OCI-LY7 (cell line): ENCODE measurements at regions of chr22 and their contacts with region 1.

Region 1: DNA sequence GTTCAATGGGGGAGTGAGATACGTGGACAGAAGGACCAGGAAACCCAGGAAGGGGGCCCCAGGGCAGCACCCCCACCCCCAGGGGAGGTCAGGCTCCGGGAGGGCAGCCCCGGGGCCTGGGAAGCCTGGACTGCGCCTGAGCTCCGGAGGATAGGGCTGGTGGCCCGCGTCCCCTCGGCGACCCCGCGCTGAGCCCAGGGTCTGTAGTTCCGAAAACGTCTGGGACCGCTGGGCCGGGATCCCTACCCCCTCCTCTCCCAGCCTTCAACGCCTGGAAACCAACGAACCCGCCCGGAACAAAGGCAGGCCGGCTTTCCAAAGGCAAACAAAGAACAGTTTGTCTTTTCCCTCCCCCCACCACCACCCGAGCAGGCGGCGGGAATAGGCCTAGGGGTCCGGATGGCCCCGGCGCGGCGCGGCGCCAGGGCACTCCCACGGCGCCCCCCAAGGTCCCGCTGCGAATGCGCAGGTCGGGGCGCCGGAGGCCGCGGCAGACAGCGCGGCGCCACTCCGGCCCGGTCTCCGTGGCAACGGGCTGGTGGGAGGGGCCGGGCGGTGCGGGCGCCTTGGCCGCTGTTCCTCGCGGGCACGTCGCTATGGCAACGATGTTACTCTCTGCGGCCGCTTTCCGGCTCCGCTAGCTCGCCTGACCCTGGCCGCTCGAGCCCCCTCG is 58.5 kb downstream of the IGLL1 start:
- DNase-seq: peak; percentile 85
- H3K4me3 ChIP-seq: peak overlapping the region; percentile 57
- H3K27ac ChIP-seq: no peak overlapping the region
- H3K4me1 ChIP-seq: peaks cover 25% of the 10 kb centered on the region
- CTCF ChIP-seq: peak; percentile 55

Region 2: DNA sequence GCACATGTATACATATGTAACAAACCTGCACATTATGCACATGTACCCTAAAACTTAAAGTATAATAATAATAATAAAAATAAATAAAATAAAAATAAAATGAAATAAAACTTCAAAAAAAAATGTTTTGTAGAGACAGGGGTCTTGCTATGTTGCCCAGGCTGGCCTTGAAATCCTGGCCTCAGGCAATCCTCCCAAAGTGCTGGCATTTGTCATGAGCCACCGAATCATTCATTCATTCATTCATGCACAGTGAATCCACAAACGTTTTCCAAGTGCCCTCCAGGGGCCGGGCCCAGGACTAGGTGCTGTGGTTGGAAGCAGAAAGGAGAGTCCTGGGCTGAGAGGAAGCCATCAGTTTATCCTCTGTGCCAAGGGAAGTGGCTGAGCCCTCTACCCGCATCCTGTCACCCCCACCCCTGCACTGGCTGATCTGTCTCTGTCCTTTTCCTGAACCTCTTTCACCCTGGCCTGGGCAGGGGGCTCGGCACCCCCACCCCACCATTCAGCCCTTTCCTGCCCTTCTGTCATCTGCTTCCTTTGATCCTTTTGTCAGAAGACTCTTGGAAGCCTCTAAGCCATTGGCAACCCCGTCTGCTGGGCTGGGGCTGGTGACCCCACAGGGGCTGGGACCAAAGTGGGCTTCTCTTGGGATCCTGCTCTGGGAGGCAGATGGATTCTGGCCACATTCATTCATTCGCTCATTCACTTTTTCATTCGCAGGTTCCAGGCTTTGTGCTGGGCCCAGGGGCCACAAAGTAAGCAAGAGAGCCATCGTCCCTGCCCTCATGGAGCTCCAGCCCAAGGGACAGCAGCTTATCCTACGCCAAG is 25.7 kb before region 1 on chr22:
- CTCF ChIA-PET with region 1: no interaction called
- POLR2A ChIA-PET with region 1: interaction called, 3 read pairs
- intact Hi-C with region 1: loop called (anchors 2 kb)
- DNase-seq: peak; percentile 20
- H3K4me3 ChIP-seq: no peak overlapping the region
- H3K27ac ChIP-seq: no peak overlapping the region
- H3K4me1 ChIP-seq: peaks cover 10% of the 10 kb centered on the region
- CTCF ChIP-seq: no peak